Activated CD8-positive, alpha-beta T cell treated with anti-CD3 and anti-CD28 coated beads, Interleukin-2, amount 10 ng/mL, durations not matched to agents 7 days and 5 days (primary cell): ENCODE measurements at regions of chr2 and their contacts with region 1.

Region 1: DNA sequence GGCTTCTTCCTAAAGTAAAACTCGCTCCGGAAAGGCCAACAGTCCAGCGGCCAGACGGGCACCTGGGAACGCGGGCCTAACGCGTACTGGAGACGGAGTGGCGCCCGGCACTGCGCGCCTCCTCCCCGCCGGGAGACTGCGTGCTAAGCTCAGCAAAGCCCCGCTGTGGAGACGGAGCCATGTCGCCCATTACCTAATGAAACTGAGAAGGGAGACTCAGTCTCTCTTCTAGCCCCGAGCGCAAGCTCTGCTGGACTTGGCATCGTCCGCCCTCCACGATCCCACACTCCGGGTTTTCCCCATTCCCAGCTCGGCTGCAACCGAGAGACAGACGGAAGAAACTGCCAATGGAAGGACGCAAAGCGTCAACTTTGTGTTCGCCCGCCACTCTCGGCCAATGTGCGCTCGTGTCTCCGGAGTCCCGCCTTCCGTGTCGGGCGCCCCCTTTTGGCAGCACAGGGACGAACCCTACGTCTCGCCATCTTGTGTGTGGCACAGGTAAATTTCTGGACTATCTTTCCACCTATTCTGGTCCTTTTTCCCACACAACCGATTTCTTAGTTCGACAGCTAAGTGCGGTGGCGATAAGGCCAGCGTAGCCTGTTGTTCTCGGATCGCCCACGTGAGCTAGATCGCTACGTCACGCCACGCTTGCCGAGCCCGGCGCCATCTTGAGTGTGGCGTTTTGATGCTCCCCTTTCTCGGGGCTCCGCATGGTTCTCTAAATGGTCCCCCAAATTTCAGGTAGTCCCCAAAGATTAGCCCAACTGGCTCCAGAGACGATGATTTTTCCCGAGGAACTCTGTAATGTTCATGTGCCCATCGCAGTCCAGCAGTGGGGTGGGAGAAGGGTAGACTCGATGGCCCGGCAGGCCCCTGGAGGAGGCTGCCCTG is 1.3 kb upstream of the PTMA start:
- DNase-seq: peak; percentile 98
- ATAC-seq: peak; percentile 38
- H3K4me3 Mint-ChIP-seq: peak overlapping the region; percentile 97
- H3K27ac Mint-ChIP-seq: peak overlapping the region; percentile 100
- H3K4me1 Mint-ChIP-seq: peaks cover 22% of the 10 kb centered on the region
- H3K27me3 Mint-ChIP-seq: no peaks in the 10 kb centered on the region

Region 2: GRCh38 chr2:231662028-231662810 is 44.8 kb before region 1 on chr2:
- CTCF ChIA-PET with region 1: interaction called, 16 read pairs
- POLR2A ChIA-PET with region 1: interaction called, 18 read pairs
- DNase-seq: peak; percentile 97
- ATAC-seq: peak; percentile 96
- H3K4me3 Mint-ChIP-seq: peak overlapping the region; percentile 71
- H3K27ac Mint-ChIP-seq: peak overlapping the region; percentile 94
- H3K4me1 Mint-ChIP-seq: peaks cover 38% of the 10 kb centered on the region
- H3K27me3 Mint-ChIP-seq: no peaks in the 10 kb centered on the region

Region 3: GRCh38 chr2:231680992-231681853 is 25.8 kb before region 1 on chr2:
- CTCF ChIA-PET with region 1: interaction called, 648 read pairs
- POLR2A ChIA-PET with region 1: interaction called, 67 read pairs
- DNase-seq: no peak
- ATAC-seq: peak; percentile 38
- H3K4me3 Mint-ChIP-seq: peak overlapping the region; percentile 43
- H3K27ac Mint-ChIP-seq: no peak overlapping the region
- H3K4me1 Mint-ChIP-seq: peaks cover 10% of the 10 kb centered on the region
- H3K27me3 Mint-ChIP-seq: peaks cover 16% of the 10 kb centered on the region

Region 4: DNA sequence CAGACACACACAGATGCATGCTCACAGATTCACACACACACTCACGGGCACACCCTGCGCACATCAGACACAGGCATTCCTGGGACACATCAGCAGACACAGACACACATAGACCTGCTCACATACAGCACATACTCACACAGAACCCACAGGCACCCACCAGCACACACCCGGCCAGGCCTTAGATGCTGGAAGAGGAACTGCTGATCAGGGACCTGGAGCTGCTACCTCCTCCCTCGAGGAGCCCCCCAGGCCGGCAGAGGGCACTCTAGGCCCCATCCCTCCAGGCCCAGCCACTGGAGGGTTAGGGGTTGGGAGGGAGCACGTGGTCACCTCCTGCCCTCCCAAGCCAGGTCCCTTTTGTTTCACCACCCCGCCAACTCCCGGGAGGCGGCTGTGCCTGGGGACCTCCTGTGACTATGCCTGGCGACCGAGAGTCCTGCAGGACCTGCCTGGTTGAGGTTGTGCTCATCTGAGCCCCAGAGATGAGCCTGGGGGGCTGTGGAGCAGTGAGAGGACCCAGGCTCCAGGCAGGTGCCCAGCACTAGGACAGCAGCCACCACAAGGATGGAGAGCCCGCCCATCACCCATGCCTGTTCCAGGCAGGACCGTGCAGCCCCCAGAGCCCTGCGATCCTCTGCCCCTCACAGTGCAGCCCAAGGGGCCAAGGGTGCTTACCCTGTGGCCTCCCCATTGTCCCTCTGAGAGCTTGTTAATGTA is 19.7 kb before region 1 on chr2:
- CTCF ChIA-PET with region 1: interaction called, 648 read pairs
- POLR2A ChIA-PET with region 1: interaction called, 16 read pairs
- DNase-seq: peak; percentile 72
- ATAC-seq: peak; percentile 92
- H3K4me3 Mint-ChIP-seq: no peak overlapping the region
- H3K27ac Mint-ChIP-seq: no peak overlapping the region
- H3K4me1 Mint-ChIP-seq: peaks cover 15% of the 10 kb centered on the region
- H3K27me3 Mint-ChIP-seq: peaks cover 6% of the 10 kb centered on the region

Region 5: GRCh38 chr2:231732604-231733003 is 25.6 kb after region 1 on chr2:
- CTCF ChIA-PET with region 1: no interaction called
- POLR2A ChIA-PET with region 1: no interaction called
- DNase-seq: no peak
- ATAC-seq: no peak
- H3K4me3 Mint-ChIP-seq: no peak overlapping the region
- H3K27ac Mint-ChIP-seq: no peak overlapping the region
- H3K4me1 Mint-ChIP-seq: no peaks in the 10 kb centered on the region
- H3K27me3 Mint-ChIP-seq: no peaks in the 10 kb centered on the region

Region 6: DNA sequence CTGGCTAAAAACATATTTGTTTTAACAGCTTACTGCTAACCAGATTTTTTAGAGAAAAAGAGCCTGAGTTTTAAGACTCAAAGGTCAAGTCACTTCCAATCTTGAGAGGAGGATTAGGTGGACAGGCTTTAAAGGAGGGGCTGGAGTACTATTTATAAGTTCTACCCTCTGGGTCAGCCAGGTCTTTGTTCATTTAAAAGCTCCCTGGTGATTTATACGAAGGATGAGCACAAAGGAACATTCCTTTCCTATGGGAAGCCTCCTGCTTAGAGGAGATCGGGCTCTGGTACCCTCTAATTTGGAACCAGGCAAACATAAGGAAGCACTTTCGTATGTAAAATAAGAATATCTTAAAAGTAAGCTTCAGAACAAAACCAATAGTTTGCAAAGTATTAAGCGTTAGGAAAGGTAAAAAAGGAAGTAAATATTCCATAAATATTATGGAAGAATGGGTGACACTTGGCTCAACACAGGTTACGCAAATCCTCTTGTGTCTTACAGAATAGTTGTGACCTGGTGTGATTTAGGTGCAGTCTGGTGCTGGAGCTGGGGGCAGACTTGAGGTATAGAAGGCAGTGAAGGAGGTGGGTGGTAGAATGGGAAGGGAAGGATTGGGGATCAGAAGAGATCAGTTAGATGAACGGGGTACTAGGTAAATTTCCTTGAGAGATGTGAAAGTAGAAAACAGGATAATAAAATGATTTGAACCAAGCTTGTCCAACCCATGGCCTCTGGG is 38.5 kb after region 1 on chr2:
- CTCF ChIA-PET with region 1: no interaction called
- POLR2A ChIA-PET with region 1: no interaction called
- DNase-seq: no peak
- ATAC-seq: no peak
- H3K4me3 Mint-ChIP-seq: no peak overlapping the region
- H3K27ac Mint-ChIP-seq: no peak overlapping the region
- H3K4me1 Mint-ChIP-seq: peaks cover 8% of the 10 kb centered on the region
- H3K27me3 Mint-ChIP-seq: no peaks in the 10 kb centered on the region

Region 7: GRCh38 chr2:231940795-231941194 is 233.8 kb after region 1 on chr2:
- CTCF ChIA-PET with region 1: no interaction called
- POLR2A ChIA-PET with region 1: no interaction called
- DNase-seq: no peak
- ATAC-seq: no peak
- H3K4me3 Mint-ChIP-seq: no peak overlapping the region
- H3K27ac Mint-ChIP-seq: no peak overlapping the region
- H3K4me1 Mint-ChIP-seq: peaks cover 4% of the 10 kb centered on the region
- H3K27me3 Mint-ChIP-seq: no peaks in the 10 kb centered on the region